ENCODE measurements at regions of chr14 and their contacts with region 1.

Region 1: GRCh38 chr14:71855399-71856036 is 76.7 kb upstream of the RGS6 start:
- DNase-seq: peak; percentile 55 to 79 (median 67)
- ATAC-seq: peak in 3 of 4 donors; percentile 41 to 69 (median 68)
- H3K4me3 ChIP-seq: no peak overlapping the region
- H3K27ac ChIP-seq: no peak overlapping the region
- H3K4me1 ChIP-seq: peaks cover 0 to 13% (median 5%) of the 10 kb centered on the region in 12 donors
- H3K27me3 ChIP-seq: no peaks in the 10 kb centered on the region
- CTCF ChIP-seq: peak; percentile 39 to 76 (median 64)
- POLR2A ChIP-seq: no peak

Region 2: DNA sequence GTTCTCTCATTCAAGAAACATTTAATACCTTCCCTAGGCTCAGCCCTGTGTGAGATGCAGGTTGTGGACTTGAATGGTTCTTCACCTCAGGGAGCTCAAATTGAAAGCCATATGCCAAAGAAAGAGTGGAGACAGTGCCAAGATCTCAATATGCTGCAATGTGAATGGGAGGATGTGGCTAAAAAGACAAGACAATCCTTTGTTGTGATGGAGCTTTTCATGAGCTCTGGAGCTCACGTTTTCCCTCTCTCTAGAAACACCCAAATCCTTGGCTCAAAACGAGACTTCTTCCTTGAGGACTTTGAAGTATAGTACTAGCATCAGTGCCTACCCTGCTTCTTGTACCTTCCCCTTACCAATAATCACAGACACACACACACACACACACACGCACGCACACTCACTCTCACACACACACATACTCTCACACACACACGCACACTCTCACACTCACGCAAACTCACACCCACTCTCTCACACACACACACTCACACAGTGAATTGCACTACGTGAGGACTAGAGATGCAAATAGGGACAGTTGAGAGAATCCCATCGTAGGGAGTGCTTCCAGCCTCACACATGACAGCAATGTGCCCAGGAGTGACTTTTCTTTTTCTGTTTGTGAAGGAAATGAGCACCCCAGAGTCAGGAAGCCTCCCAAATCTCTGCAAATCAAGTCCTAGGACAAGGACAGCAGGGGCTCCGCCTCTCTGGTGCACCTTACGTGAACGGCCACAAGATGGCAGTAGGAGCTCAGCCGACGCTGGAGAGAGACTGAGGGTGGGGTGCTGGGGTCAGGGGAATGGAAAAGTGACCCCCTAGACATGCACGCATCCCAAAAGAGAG is 716.8 kb before region 1 on chr14:
- intact Hi-C with region 1: loop called in 7 of 10 experiments (anchors 5 to 10 kb)
- DNase-seq: peak; percentile 36 to 77 (median 47)
- ATAC-seq: peak; percentile 55 to 85 (median 72)
- H3K4me3 ChIP-seq: peak overlapping the region in 2 of 12 donors; percentile 7 to 28
- H3K27ac ChIP-seq: no peak overlapping the region
- H3K4me1 ChIP-seq: peaks cover 0 to 31% (median 0%) of the 10 kb centered on the region in 12 donors
- H3K27me3 ChIP-seq: no peaks in the 10 kb centered on the region
- CTCF ChIP-seq: peak; percentile 88 to 95 (median 92)
- POLR2A ChIP-seq: no peak

Region 3: GRCh38 chr14:71720978-71721624 is 134.4 kb before region 1 on chr14:
- intact Hi-C with region 1: loop called in 8 of 10 experiments (anchors 1 to 10 kb)
- DNase-seq: peak in 3 of 5 donors; percentile 33 to 42 (median 41)
- ATAC-seq: peak; percentile 67 to 91 (median 82)
- H3K4me3 ChIP-seq: no peak overlapping the region
- H3K27ac ChIP-seq: no peak overlapping the region
- H3K4me1 ChIP-seq: no peaks in the 10 kb centered on the region
- H3K27me3 ChIP-seq: no peaks in the 10 kb centered on the region
- CTCF ChIP-seq: peak; percentile 37 to 68 (median 57)
- POLR2A ChIP-seq: no peak

Region 4: GRCh38 chr14:71734885-71735284 is 120.6 kb before region 1 on chr14:
- intact Hi-C with region 1: no loop called
- DNase-seq: no peak
- ATAC-seq: no peak
- H3K4me3 ChIP-seq: no peak overlapping the region
- H3K27ac ChIP-seq: no peak overlapping the region
- H3K4me1 ChIP-seq: peaks cover 0 to 7% (median 0%) of the 10 kb centered on the region in 12 donors
- H3K27me3 ChIP-seq: no peaks in the 10 kb centered on the region
- CTCF ChIP-seq: no peak
- POLR2A ChIP-seq: no peak

Region 5: GRCh38 chr14:71753126-71753830 is 102.2 kb before region 1 on chr14:
- intact Hi-C with region 1: loop called in 3 of 10 experiments (anchors 1 to 10 kb)
- DNase-seq: peak; percentile 90 to 95 (median 92)
- ATAC-seq: peak in 3 of 4 donors; percentile 85 to 90 (median 90)
- H3K4me3 ChIP-seq: peak overlapping the region in 4 of 12 donors; percentile 2 to 22 (median 12)
- H3K27ac ChIP-seq: peak overlapping the region in 2 of 12 donors; percentile 15 to 38
- H3K4me1 ChIP-seq: peaks cover 0 to 16% (median 2%) of the 10 kb centered on the region in 12 donors
- H3K27me3 ChIP-seq: no peaks in the 10 kb centered on the region
- CTCF ChIP-seq: peak; percentile 71 to 96 (median 94)
- POLR2A ChIP-seq: no peak

Region 6: GRCh38 chr14:71780075-71780474 is 75.4 kb before region 1 on chr14:
- intact Hi-C with region 1: loop called in 2 of 10 experiments (anchors 10 kb)
- DNase-seq: peak in 2 of 5 donors; percentile 34 to 45
- ATAC-seq: peak; percentile 62 to 95 (median 72)
- H3K4me3 ChIP-seq: no peak overlapping the region
- H3K27ac ChIP-seq: peak overlapping the region in 7 of 12 donors; percentile 22 to 55 (median 39)
- H3K4me1 ChIP-seq: peaks cover 0 to 19% (median 0%) of the 10 kb centered on the region in 12 donors
- H3K27me3 ChIP-seq: peaks cover 0 to 3% (median 0%) of the 10 kb centered on the region in 9 donors
- CTCF ChIP-seq: no peak
- POLR2A ChIP-seq: no peak